ENCODE measurements at regions of chr15 and their contacts with region 1.

Region 1: GRCh38 chr15:65792130-65792987 is at the start of gene DENND4A:
- DNase-seq: peak; percentile 95
- ATAC-seq: peak; percentile 83
- H3K4me3 Mint-ChIP-seq: peak within 1 kb of the TSS; percentile 90
- H3K27ac Mint-ChIP-seq: peak within 1 kb of the TSS; percentile 98
- H3K4me1 Mint-ChIP-seq: peaks cover 64% of the 10 kb centered on the region
- H3K27me3 Mint-ChIP-seq: no peaks in the 10 kb centered on the region
- CTCF ChIP-seq: no peak
- total RNA-seq, gene DENND4A: 135 and 166 TPM in 2 replicates

Region 2: GRCh38 chr15:65530314-65531122 is 261.8 kb before region 1 on chr15 and contains the start of gene HACD3:
- CTCF ChIA-PET with region 1: no interaction called
- POLR2A ChIA-PET with region 1: no interaction called
- intact Hi-C with region 1: loop called (anchors 5 kb)
- DNase-seq: peak; percentile 92
- ATAC-seq: peak; percentile 98
- H3K4me3 Mint-ChIP-seq: peak within 1 kb of the TSS; percentile 87
- H3K27ac Mint-ChIP-seq: peak within 1 kb of the TSS; percentile 74
- H3K4me1 Mint-ChIP-seq: peaks cover 21% of the 10 kb centered on the region
- H3K27me3 Mint-ChIP-seq: no peaks in the 10 kb centered on the region
- CTCF ChIP-seq: no peak
- total RNA-seq, gene HACD3: 11.5 and 12.1 TPM in 2 replicates

Region 3: DNA sequence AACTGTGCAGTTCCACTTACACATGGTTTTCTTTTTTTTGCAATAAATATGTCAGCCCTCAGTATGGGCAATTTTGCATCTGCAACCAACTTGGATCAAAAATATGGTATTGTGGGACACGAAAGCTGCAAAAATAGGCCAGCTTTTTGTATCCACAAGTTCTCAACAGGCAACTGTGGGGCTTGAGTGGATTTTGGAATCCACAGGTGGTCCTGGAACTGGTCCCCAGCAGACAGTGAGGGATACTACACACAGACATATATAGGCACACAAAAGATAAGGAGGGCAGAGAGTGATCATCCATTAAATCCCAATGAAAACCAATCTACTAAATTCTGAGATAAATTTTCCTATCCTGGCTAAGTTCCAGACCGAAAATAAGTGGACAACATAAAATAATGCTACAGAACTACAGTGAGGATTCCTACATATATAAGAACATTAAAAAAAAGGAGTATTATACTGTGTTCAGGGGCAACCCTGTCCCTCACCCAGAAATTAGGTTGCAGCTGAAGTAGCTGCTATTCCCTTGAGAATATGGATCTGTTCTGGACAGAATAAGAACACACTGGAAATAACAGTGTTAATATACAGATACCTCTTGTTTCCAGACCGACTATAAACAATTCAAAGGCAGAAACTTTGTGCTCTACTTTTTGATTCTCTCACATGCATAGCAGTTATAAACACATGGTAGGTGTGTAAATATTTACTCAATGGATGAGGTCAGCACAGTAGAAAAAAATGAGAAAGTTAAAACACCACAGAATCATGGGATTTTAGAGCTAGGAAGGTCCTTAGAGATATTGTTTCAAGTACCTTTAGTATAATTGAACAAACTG is 25.7 kb before region 1 on chr15:
- CTCF ChIA-PET with region 1: no interaction called
- POLR2A ChIA-PET with region 1: interaction called, 65 read pairs
- intact Hi-C with region 1: no loop called
- DNase-seq: no peak
- ATAC-seq: no peak
- H3K4me3 Mint-ChIP-seq: no peak overlapping the region
- H3K27ac Mint-ChIP-seq: no peak overlapping the region
- H3K4me1 Mint-ChIP-seq: peaks cover 88% of the 10 kb centered on the region
- H3K27me3 Mint-ChIP-seq: no peaks in the 10 kb centered on the region
- CTCF ChIP-seq: no peak

Region 4: DNA sequence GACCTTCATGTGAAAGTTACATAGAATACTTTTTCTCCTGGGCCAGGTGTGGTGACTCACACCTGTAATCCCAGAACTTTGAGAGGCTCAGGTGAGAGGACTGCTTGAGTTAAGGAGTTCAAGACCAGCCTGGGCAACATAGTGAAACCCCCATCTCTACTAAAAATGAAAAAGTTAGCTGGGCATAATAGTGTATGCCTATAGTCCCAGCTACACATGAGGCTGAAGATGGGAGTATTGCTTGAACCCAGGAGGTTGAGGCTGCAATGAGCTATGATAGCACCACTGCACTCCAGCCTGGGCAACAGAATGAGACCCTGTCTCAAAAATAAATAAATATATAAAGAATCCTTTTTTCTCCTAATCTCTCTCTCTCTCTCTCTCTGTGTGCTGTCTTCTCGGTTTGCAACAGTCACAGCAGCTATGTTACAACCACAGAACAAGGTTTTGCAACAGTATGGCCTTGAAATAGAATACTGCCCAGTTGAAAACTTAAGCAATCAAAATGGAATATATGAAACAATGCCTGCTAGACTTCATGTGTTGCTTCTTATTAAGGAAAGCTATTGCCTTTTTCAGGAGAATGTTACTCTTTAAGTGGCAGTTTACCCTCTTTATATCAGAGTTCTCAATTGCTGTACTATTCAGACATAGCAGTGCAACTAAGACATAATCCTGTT is 12.0 kb after region 1 on chr15:
- CTCF ChIA-PET with region 1: no interaction called
- POLR2A ChIA-PET with region 1: interaction called, 8 read pairs
- intact Hi-C with region 1: loop called (anchors 1 kb)
- DNase-seq: no peak
- ATAC-seq: no peak
- H3K4me3 Mint-ChIP-seq: no peak overlapping the region
- H3K27ac Mint-ChIP-seq: peak overlapping the region; percentile 61
- H3K4me1 Mint-ChIP-seq: peaks cover 37% of the 10 kb centered on the region
- H3K27me3 Mint-ChIP-seq: no peaks in the 10 kb centered on the region
- CTCF ChIP-seq: no peak

Region 5: DNA sequence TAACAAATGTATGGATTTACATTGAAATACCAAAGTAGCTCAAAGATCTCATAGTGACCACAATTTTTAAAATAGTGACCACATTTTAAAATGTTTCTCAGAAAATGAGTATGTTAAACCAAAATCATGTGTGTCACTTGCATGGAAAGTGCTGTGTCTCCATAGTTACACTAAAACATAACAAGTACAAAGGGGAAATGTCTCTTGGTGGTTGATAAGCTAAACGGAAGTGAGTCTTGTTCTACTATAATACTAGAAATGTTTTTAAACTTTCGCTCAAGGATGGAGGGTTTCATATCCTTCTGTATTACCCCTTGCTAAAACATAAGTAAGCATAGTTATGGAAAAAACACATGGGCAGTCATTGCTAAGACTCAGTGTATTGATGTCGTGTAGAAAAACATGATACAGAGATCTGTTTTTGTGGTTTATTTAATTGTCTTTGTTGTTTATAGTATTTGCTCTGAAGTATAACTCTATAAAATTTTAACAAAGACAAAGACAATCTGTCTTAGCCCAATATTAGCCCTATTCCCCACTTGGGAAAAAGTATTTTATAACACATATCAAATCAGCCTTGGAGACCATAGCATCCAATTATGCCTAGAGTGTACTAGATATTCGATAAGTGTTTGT is 26.7 kb after region 1 on chr15:
- CTCF ChIA-PET with region 1: interaction called, 4 read pairs
- POLR2A ChIA-PET with region 1: interaction called, 201 read pairs
- intact Hi-C with region 1: loop called (anchors 1 kb)
- DNase-seq: no peak
- ATAC-seq: peak; percentile 79
- H3K4me3 Mint-ChIP-seq: peak overlapping the region; percentile 57
- H3K27ac Mint-ChIP-seq: peak overlapping the region; percentile 95
- H3K4me1 Mint-ChIP-seq: peaks cover 76% of the 10 kb centered on the region
- H3K27me3 Mint-ChIP-seq: no peaks in the 10 kb centered on the region
- CTCF ChIP-seq: no peak

Region 6: DNA sequence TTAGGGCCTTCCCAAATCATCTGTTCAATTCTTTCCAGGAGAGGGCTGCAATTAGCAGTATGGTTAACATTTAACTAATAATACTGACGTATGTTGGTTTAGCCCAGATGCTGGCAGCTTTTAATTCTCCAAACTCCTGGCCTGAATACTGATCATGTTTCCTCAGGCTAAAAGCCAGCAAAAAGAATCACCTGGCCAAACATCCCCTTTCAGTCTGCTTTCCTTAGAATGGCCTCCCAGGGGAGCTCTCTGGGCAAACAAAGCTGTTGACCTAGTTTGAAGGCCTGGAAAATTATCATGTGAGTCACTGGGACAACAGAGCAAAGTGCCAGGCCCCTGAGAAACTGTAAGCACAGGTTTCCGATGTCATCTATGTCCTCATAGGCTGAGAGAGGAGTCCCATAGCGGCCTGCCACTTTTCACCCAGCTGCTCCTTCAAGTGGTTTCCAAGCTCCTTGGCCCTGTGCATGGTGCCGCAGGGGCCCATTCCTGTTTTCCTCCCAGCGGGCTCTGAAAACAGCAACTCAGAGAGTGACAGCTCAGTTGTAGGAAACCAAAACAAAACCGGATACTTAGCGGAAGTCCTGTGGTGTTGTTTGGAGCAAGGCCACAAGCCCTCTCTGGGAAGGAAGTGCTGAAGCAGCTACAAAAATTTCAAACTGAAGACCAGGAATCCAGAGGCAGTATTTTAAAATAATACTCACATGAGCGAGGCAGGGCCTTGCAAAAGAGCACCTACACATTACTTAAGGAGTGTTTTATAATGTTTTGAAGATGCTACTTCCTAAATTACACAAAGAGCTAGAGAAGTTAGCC is 40.4 kb after region 1 on chr15:
- CTCF ChIA-PET with region 1: interaction called, 10 read pairs
- POLR2A ChIA-PET with region 1: interaction called, 27 read pairs
- intact Hi-C with region 1: loop called (anchors 2 kb)
- DNase-seq: peak; percentile 38
- ATAC-seq: peak; percentile 59
- H3K4me3 Mint-ChIP-seq: peak overlapping the region; percentile 68
- H3K27ac Mint-ChIP-seq: peak overlapping the region; percentile 86
- H3K4me1 Mint-ChIP-seq: peaks cover 64% of the 10 kb centered on the region
- H3K27me3 Mint-ChIP-seq: no peaks in the 10 kb centered on the region
- CTCF ChIP-seq: no peak

Measured in activated B cell treated with CpG ODN at 0.5 μM for 24 hours (primary cell).